PC-9 (cell line): ENCODE measurements at regions of chr5 and their contacts with region 1.

Region 1: GRCh38 chr5:154368041-154368800 is 77.6 kb upstream of the SAP30L start:
- DNase-seq: peak; percentile 76 to 96
- H3K4me3 ChIP-seq: peak overlapping the region; percentile 34; the same call in 1 of the 2 replicates
- H3K27ac ChIP-seq: peak overlapping the region; percentile 98
- H3K4me1 ChIP-seq: peaks cover 69% of the 10 kb centered on the region
- H3K27me3 ChIP-seq: no peaks in the 10 kb centered on the region
- CTCF ChIP-seq: no peak

Region 2: GRCh38 chr5:154221371-154221896 is 146.8 kb before region 1 on chr5:
- CTCF ChIA-PET with region 1: no interaction called
- POLR2A ChIA-PET with region 1: no interaction called
- intact Hi-C with region 1: loop called (anchors 1 kb)
- DNase-seq: peak; percentile 78 to 95
- H3K4me3 ChIP-seq: peak overlapping the region; percentile 17; the same call in 1 of the 2 replicates
- H3K27ac ChIP-seq: peak overlapping the region; percentile 91
- H3K4me1 ChIP-seq: peaks cover 50% of the 10 kb centered on the region
- H3K27me3 ChIP-seq: no peaks in the 10 kb centered on the region
- CTCF ChIP-seq: no peak

Region 3: GRCh38 chr5:154308443-154309370 is 59.5 kb before region 1 on chr5:
- CTCF ChIA-PET with region 1: no interaction called
- POLR2A ChIA-PET with region 1: no interaction called
- intact Hi-C with region 1: loop called (anchors 2 kb)
- DNase-seq: peak in 1 of 2 experiments; percentile 79
- H3K4me3 ChIP-seq: no peak overlapping the region
- H3K27ac ChIP-seq: peak overlapping the region; percentile 60
- H3K4me1 ChIP-seq: peaks cover 73% of the 10 kb centered on the region
- H3K27me3 ChIP-seq: no peaks in the 10 kb centered on the region
- CTCF ChIP-seq: no peak